ENCODE measurements at regions of chr11 and their contacts with region 1.

Region 1: GRCh38 chr11:65646921-65647751 is 9.2 kb downstream of the SIPA1 start:
- DNase-seq: peak in 1 of 2 experiments; percentile 89
- H3K4me3 ChIP-seq: peak overlapping the region; percentile 52 to 70 (median 68)
- H3K27ac ChIP-seq: peak overlapping the region; percentile 35; the same call in 1 of the 2 replicates
- H3K4me1 ChIP-seq: peaks cover 0 to 20% (median 10%) of the 10 kb centered on the region in 4 experiments; a peak in 6 of 7 replicates
- H3K27me3 ChIP-seq: peaks cover 0 to 8% (median 4%) of the 10 kb centered on the region in 4 experiments; a peak in 3 of 7 replicates
- CTCF ChIP-seq: peak in 1 of 3 experiments; percentile 55; a peak in 2 of 4 replicates
- EP300 ChIP-seq: no peak
- POLR2A ChIP-seq: peak in 1 of 2 experiments; percentile 68; a peak in 1 of 3 replicates
- RAD21 ChIP-seq: peak; percentile 13 to 39; a peak in 2 of 4 replicates

Region 2: GRCh38 chr11:65625628-65626342 is 21.4 kb before region 1 on chr11:
- CTCF ChIA-PET with region 1: interaction called, 7 read pairs
- POLR2A ChIA-PET with region 1: interaction called, 18 read pairs
- DNase-seq: peak in 1 of 2 experiments; percentile 70
- H3K4me3 ChIP-seq: no peak overlapping the region
- H3K27ac ChIP-seq: no peak overlapping the region
- H3K4me1 ChIP-seq: no peaks in the 10 kb centered on the region
- H3K27me3 ChIP-seq: no peaks in the 10 kb centered on the region
- CTCF ChIP-seq: peak in 2 of 3 experiments; percentile 42 to 59; a peak in 2 of 4 replicates
- EP300 ChIP-seq: no peak
- POLR2A ChIP-seq: no peak
- RAD21 ChIP-seq: peak; percentile 61 to 64

Region 3: GRCh38 chr11:65662799-65663638 is 15.9 kb after region 1 on chr11 and contains the start of gene RELA:
- CTCF ChIA-PET with region 1: interaction called, 10 read pairs
- POLR2A ChIA-PET with region 1: interaction called, 58 read pairs
- DNase-seq: peak in 1 of 2 experiments; percentile 91
- H3K4me3 ChIP-seq: peak within 1 kb of the TSS; percentile 81 to 86 (median 84)
- H3K27ac ChIP-seq: peak within 1 kb of the TSS; percentile 71
- H3K4me1 ChIP-seq: peaks cover 0 to 5% (median 2%) of the 10 kb centered on the region in 4 experiments; a peak in 4 of 7 replicates
- H3K27me3 ChIP-seq: no peaks in the 10 kb centered on the region
- CTCF ChIP-seq: no peak
- EP300 ChIP-seq: peak in 1 of 2 experiments; percentile 66; a peak in 1 of 3 replicates
- POLR2A ChIP-seq: peak in 1 of 2 experiments; percentile 51; a peak in 2 of 3 replicates
- RAD21 ChIP-seq: no peak
- total RNA-seq, gene RELA: 25.5 and 27.5 TPM in 2 replicates

Region 4: DNA sequence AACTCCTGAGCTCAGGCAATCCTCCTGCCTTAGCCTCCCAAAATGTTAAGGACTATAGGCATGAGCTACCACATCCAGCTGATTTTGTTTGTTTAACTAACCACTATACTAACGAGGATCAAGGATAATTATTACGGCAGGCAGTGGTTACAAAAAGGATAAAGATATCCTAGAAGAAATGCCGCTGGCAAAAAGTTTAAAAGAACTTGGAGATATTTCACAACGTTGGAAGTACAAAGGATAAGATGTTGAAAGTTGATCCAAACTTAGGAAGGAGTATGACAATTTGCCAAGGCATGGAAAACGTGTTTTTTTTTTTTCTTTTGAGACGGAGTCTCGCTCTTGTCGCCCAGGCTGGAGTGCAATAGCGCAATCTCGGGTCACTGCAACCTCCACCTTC is 120.3 kb after region 1 on chr11:
- CTCF ChIA-PET with region 1: no interaction called
- POLR2A ChIA-PET with region 1: no interaction called
- DNase-seq: no peak
- H3K4me3 ChIP-seq: no peak overlapping the region
- H3K27ac ChIP-seq: no peak overlapping the region
- H3K4me1 ChIP-seq: no peaks in the 10 kb centered on the region
- H3K27me3 ChIP-seq: no peaks in the 10 kb centered on the region
- CTCF ChIP-seq: no peak
- EP300 ChIP-seq: no peak
- POLR2A ChIP-seq: no peak
- RAD21 ChIP-seq: no peak